K562 (cell line): ENCODE measurements at regions of chr5 and their contacts with region 1.

Region 1: DNA sequence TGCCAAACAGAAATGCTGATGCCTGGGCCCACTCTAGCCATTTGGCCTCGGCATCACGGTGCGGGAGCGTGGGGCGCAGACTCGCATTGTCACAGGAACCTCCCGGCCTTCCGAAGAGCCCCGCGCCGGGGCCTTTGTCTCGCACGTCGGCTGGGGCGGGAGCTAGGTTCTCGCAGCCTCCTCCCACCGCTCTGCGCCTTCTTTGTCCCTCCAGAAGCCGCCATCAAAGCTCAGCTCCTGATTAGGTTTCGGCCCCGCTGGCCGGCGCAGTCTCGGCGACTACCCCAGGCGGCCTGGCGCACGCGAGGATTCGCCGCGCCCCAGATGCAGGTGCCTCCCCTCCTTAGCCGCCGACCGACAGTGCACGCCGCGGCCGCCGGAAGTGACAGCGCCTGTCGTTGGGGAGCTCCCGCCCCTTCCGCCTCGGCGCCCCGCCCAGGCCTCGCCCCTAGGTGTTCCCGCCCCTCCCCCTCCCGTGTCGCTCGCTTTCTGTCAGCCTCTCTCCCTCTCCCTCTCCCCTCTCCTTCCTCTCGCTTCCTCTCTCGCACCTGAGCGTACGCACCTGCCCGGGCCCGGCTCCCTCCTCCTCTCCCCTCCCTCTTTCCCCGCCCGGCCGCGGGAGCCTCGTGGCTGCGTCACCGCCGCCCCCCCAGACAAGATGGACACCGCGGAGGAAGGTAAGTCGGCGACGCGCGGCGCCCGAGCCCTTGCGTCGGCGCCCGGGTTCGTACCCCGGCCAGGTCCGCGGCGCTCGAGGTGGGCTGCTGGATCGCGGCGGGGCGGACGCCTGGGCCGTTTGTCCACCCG is at the start of gene MARCHF6:
- DNase-seq: peak; percentile 91 to 99 (median 92)
- ATAC-seq: peak; percentile 80
- H3K4me3 ChIP-seq: peak within 1 kb of the TSS; percentile 60
- H3K27ac ChIP-seq: peak within 1 kb of the TSS; percentile 96
- H3K4me1 ChIP-seq: peaks cover 22 to 34% of the 10 kb centered on the region in 2 experiments
- H3K27me3 ChIP-seq: no peaks in the 10 kb centered on the region
- CTCF ChIP-seq: peak in 1 of 3 experiments; percentile 7; a peak in 1 of 6 replicates
- EP300 ChIP-seq: peak; percentile 49
- POLR2A ChIP-seq: peak; percentile 98
- RAD21 ChIP-seq: no peak
- polyA plus RNA-seq, gene MARCHF6: 170 to 176 TPM

Region 2: DNA sequence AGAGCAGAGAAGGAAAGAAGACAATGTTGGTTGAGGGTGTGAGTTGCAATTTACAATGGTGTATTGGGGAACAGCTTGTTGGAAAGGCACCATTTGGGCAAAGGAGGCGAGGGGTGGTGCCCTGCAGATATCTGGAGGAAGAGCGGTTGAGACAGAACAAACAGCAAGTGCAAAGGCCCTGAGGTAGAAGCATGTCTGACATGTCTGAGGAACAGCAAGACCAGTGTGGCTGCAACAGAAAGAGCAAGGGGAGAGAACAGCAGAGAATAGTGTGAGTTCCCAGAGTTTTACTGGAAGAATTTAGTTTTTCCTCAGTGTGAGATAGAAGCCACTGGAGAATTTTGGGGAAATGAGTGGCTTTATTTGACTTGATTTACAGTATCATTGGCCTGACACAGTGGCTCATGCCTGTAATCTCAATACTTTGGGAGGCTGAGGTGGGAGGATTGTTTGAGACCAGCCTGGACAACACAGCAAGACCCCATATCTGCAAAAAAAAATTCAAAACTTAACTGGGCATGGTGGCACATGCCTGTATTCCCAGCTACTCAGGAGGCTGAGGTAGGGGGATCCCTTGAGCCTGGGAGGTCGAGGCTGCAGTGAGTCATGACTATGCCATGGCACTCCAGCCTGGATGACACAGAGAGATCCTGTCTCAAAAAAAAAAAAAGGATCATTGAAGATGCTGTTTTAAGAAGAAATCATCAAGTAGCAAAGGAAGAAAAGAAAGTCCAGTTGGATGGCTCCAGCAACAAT is 59.4 kb before region 1 on chr5:
- CTCF ChIA-PET with region 1: no interaction called
- POLR2A ChIA-PET with region 1: interaction called, 5 read pairs
- in situ Hi-C with region 1: no loop called
- intact Hi-C with region 1: loop called (anchors 5 kb)
- DNase-seq: no peak
- ATAC-seq: no peak; the same call in 2 of the 3 replicates
- H3K4me3 ChIP-seq: no peak overlapping the region
- H3K27ac ChIP-seq: peak overlapping the region; percentile 81
- H3K4me1 ChIP-seq: peaks cover 44 to 60% of the 10 kb centered on the region in 2 experiments
- H3K27me3 ChIP-seq: no peaks in the 10 kb centered on the region
- CTCF ChIP-seq: no peak
- EP300 ChIP-seq: no peak
- POLR2A ChIP-seq: no peak
- RAD21 ChIP-seq: no peak

Region 3: GRCh38 chr5:10317825-10318682 is 35.4 kb before region 1 on chr5:
- CTCF ChIA-PET with region 1: interaction called, 3 read pairs
- POLR2A ChIA-PET with region 1: interaction called, 27 read pairs
- in situ Hi-C with region 1: no loop called
- intact Hi-C with region 1: loop called (anchors 1 kb)
- DNase-seq: peak in 3 of 4 experiments; percentile 20 to 81 (median 63)
- ATAC-seq: peak; percentile 30
- H3K4me3 ChIP-seq: no peak overlapping the region
- H3K27ac ChIP-seq: peak overlapping the region; percentile 77
- H3K4me1 ChIP-seq: peaks cover 33 to 35% of the 10 kb centered on the region in 2 experiments
- H3K27me3 ChIP-seq: no peaks in the 10 kb centered on the region; a peak in 1 of 5 replicates
- CTCF ChIP-seq: no peak
- EP300 ChIP-seq: peak; percentile 61; the same call in 1 of the 2 replicates
- POLR2A ChIP-seq: no peak
- RAD21 ChIP-seq: no peak

Region 4: GRCh38 chr5:10339058-10339811 is 14.2 kb before region 1 on chr5:
- CTCF ChIA-PET with region 1: no interaction called
- POLR2A ChIA-PET with region 1: interaction called, 20 read pairs
- in situ Hi-C with region 1: no loop called
- intact Hi-C with region 1: loop called (anchors 1 kb)
- DNase-seq: no peak
- ATAC-seq: no peak
- H3K4me3 ChIP-seq: no peak overlapping the region
- H3K27ac ChIP-seq: no peak overlapping the region
- H3K4me1 ChIP-seq: no peaks in the 10 kb centered on the region; a peak in 3 of 5 replicates
- H3K27me3 ChIP-seq: no peaks in the 10 kb centered on the region
- CTCF ChIP-seq: no peak
- EP300 ChIP-seq: no peak
- POLR2A ChIP-seq: no peak
- RAD21 ChIP-seq: no peak

Region 5: GRCh38 chr5:10384483-10384882 is 31.0 kb after region 1 on chr5:
- CTCF ChIA-PET with region 1: no interaction called
- POLR2A ChIA-PET with region 1: interaction called, 10 read pairs
- in situ Hi-C with region 1: no loop called
- intact Hi-C with region 1: no loop called
- DNase-seq: no peak
- ATAC-seq: no peak; the same call in 2 of the 3 replicates
- H3K4me3 ChIP-seq: no peak overlapping the region
- H3K27ac ChIP-seq: no peak overlapping the region
- H3K4me1 ChIP-seq: no peaks in the 10 kb centered on the region
- H3K27me3 ChIP-seq: no peaks in the 10 kb centered on the region
- CTCF ChIP-seq: no peak
- EP300 ChIP-seq: no peak
- POLR2A ChIP-seq: no peak
- RAD21 ChIP-seq: no peak

Region 6: GRCh38 chr5:10621832-10622231 is 268.4 kb after region 1 on chr5:
- CTCF ChIA-PET with region 1: no interaction called
- POLR2A ChIA-PET with region 1: no interaction called
- in situ Hi-C with region 1: no loop called
- intact Hi-C with region 1: no loop called
- DNase-seq: no peak
- ATAC-seq: no peak
- H3K4me3 ChIP-seq: no peak overlapping the region
- H3K27ac ChIP-seq: no peak overlapping the region
- H3K4me1 ChIP-seq: peaks cover 0 to 11% of the 10 kb centered on the region in 2 experiments; a peak in 2 of 5 replicates
- H3K27me3 ChIP-seq: peaks cover 10 to 40% of the 10 kb centered on the region in 2 experiments; a peak in 3 of 5 replicates
- CTCF ChIP-seq: no peak
- EP300 ChIP-seq: no peak
- POLR2A ChIP-seq: no peak
- RAD21 ChIP-seq: no peak